CD8-positive, alpha-beta T cell (primary cell): ENCODE measurements at regions of chr15 and their contacts with region 1.

Region 1: DNA sequence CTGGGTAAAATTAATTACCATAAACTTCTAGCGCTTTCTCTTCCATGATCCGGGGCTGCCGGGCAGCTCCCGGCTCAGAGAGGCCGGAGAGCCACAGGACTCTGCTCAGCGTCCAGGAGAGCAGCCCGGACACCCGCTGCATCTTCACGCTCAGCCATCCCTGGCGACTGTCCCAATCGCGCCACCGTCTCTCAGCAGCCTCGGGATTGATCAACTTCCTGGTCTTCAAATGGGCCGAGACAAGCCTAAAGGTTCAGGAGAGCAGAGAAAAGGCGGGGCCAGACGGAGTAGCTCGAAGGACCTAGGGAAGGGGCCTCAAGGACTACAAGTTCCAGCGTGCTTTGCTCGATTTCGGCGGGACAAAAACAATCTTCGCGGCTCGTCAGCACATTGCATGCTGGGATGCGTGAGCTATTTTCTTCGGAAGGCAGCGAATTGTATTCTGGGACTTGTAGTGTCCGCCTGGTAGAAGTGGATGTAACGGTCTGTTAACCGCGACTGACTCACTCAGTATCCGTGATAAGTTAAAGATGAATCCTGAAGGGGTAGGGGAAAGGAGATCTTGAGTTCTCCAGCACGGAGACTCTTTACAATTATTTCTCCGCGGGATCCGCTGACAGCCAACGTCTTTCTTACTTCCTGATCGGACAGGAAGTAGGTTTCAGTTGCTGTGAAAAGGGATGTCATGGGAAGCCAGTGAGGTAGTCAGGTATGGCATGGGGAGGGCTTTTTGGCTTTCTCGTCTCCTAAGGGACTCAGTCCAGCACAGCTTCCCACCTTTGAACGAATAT is at the start of gene CIAO2A:
- DNase-seq: peak; percentile 79 to 97 (median 91)
- ATAC-seq: peak; percentile 72
- H3K4me3 ChIP-seq: peak within 1 kb of the TSS; percentile 73 to 76
- H3K4me3 Mint-ChIP-seq: peak within 1 kb of the TSS; percentile 94
- H3K27ac ChIP-seq: peak within 1 kb of the TSS; percentile 82 to 91
- H3K27ac Mint-ChIP-seq: peak within 1 kb of the TSS; percentile 97
- H3K4me1 ChIP-seq: peaks cover 47% of the 10 kb centered on the region
- H3K4me1 Mint-ChIP-seq: peaks cover 74% of the 10 kb centered on the region
- H3K27me3 ChIP-seq: no peaks in the 10 kb centered on the region
- H3K27me3 Mint-ChIP-seq: no peaks in the 10 kb centered on the region
- CTCF ChIP-seq: no peak
- total RNA-seq, gene CIAO2A: 12.4 to 12.7 TPM

Region 2: DNA sequence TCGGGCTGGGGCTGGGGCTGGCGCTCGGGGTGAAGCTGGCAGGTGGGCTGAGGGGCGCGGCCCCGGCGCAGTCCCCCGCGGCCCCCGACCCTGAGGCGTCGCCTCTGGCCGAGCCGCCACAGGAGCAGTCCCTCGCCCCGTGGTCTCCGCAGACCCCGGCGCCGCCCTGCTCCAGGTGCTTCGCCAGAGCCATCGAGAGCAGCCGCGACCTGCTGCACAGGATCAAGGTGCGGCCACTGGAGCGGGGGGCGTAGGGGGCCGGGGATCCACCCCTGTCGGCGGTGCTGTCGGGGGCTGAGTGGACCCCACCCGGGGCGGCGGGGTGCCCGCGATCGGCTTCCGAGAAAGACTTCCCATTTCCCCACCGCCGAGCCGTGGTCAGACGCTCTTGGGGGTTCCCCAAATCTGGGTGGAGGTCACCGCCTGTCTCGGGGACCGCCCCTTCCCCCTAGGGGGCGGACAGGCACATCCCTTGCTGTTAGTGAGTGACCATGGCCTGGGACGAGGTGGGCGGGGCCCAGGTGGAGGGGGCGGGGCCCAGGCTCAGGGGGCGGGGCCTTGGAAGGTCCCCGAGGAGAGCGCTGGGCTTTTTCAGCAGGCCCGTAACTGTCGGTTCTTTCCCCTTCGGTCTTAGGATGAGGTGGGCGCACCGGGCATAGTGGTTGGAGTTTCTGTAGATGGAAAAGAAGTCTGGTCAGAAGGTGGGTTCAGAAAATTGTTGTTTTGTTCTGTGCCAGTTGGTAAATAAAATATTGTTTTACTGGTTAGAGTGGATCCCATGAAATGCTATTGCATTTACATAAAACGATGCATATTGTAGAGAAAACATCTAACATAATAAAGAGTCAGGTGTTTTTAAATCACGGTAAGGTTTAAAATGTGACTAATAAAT is 971.6 kb before region 1 on chr15:
- CTCF ChIA-PET with region 1: no interaction called
- POLR2A ChIA-PET with region 1: no interaction called
- intact Hi-C with region 1: loop called in 1 of 2 experiments (anchors 2 kb)
- DNase-seq: peak; percentile 19 to 87 (median 69)
- ATAC-seq: peak; percentile 81
- H3K4me3 ChIP-seq: peak overlapping the region; percentile 83 to 87
- H3K4me3 Mint-ChIP-seq: peak overlapping the region; percentile 87
- H3K27ac ChIP-seq: peak overlapping the region; percentile 61 to 66
- H3K27ac Mint-ChIP-seq: peak overlapping the region; percentile 90
- H3K4me1 ChIP-seq: peaks cover 7% of the 10 kb centered on the region
- H3K4me1 Mint-ChIP-seq: peaks cover 17% of the 10 kb centered on the region
- H3K27me3 ChIP-seq: no peaks in the 10 kb centered on the region
- H3K27me3 Mint-ChIP-seq: no peaks in the 10 kb centered on the region
- CTCF ChIP-seq: no peak

Region 3: GRCh38 chr15:63504247-63504978 is 589.4 kb before region 1 on chr15 and contains the start of gene USP3:
- CTCF ChIA-PET with region 1: interaction called, 3 read pairs
- POLR2A ChIA-PET with region 1: interaction called, 5 read pairs
- intact Hi-C with region 1: loop called (anchors 2 to 10 kb)
- DNase-seq: peak; percentile 88 to 96 (median 92)
- ATAC-seq: peak; percentile 72
- H3K4me3 ChIP-seq: peak within 1 kb of the TSS; percentile 81 to 86
- H3K4me3 Mint-ChIP-seq: peak within 1 kb of the TSS; percentile 98
- H3K27ac ChIP-seq: peak within 1 kb of the TSS; percentile 94 to 99
- H3K27ac Mint-ChIP-seq: peak within 1 kb of the TSS; percentile 100
- H3K4me1 ChIP-seq: peaks cover 77% of the 10 kb centered on the region
- H3K4me1 Mint-ChIP-seq: peaks cover 78% of the 10 kb centered on the region
- H3K27me3 ChIP-seq: no peaks in the 10 kb centered on the region
- H3K27me3 Mint-ChIP-seq: no peaks in the 10 kb centered on the region
- CTCF ChIP-seq: no peak
- total RNA-seq, gene USP3: 264 to 275 TPM

Region 4: DNA sequence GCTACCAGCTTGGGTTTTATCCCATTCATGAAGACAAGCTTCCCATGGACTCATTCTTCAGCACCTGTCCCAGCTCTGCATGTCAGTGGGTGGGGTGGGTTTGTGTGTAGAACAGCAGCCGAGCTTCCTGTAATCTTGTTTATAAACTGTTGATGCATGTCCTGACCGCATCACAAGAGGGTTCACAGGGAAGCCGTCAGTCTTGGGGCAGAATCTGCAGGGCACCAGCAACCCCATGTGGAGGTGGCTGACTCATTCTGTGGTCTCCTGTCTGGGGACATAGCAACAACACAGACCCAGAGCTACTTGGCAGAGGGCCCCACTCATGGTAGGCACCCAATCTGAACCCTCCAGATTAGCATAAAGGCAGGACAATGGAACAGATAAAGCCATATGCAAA is 83.1 kb before region 1 on chr15:
- CTCF ChIA-PET with region 1: no interaction called
- POLR2A ChIA-PET with region 1: no interaction called
- intact Hi-C with region 1: loop called in 1 of 2 experiments (anchors 2 kb)
- DNase-seq: peak; percentile 78 to 97 (median 89)
- ATAC-seq: peak; percentile 89
- H3K4me3 ChIP-seq: no peak overlapping the region
- H3K4me3 Mint-ChIP-seq: peak overlapping the region; percentile 72
- H3K27ac ChIP-seq: peak overlapping the region; percentile 52 to 67
- H3K27ac Mint-ChIP-seq: peak overlapping the region; percentile 98
- H3K4me1 ChIP-seq: peaks cover 29% of the 10 kb centered on the region
- H3K4me1 Mint-ChIP-seq: peaks cover 40% of the 10 kb centered on the region
- H3K27me3 ChIP-seq: no peaks in the 10 kb centered on the region
- H3K27me3 Mint-ChIP-seq: no peaks in the 10 kb centered on the region
- CTCF ChIP-seq: no peak

Region 5: GRCh38 chr15:64060716-64061115 is 33.1 kb before region 1 on chr15:
- CTCF ChIA-PET with region 1: no interaction called
- POLR2A ChIA-PET with region 1: no interaction called
- intact Hi-C with region 1: no loop called
- DNase-seq: peak in 1 of 9 experiments; percentile 40
- ATAC-seq: no peak
- H3K4me3 ChIP-seq: no peak overlapping the region
- H3K4me3 Mint-ChIP-seq: no peak overlapping the region
- H3K27ac ChIP-seq: no peak overlapping the region
- H3K27ac Mint-ChIP-seq: no peak overlapping the region
- H3K4me1 ChIP-seq: no peaks in the 10 kb centered on the region
- H3K4me1 Mint-ChIP-seq: no peaks in the 10 kb centered on the region
- H3K27me3 ChIP-seq: no peaks in the 10 kb centered on the region
- H3K27me3 Mint-ChIP-seq: peaks cover 2% of the 10 kb centered on the region
- CTCF ChIP-seq: no peak

Region 6: GRCh38 chr15:64209680-64210334 is 116.0 kb after region 1 on chr15:
- CTCF ChIA-PET with region 1: no interaction called
- POLR2A ChIA-PET with region 1: no interaction called
- intact Hi-C with region 1: no loop called
- DNase-seq: peak in 2 of 9 experiments; percentile 20 to 39
- ATAC-seq: no peak
- H3K4me3 ChIP-seq: no peak overlapping the region
- H3K4me3 Mint-ChIP-seq: no peak overlapping the region
- H3K27ac ChIP-seq: no peak overlapping the region
- H3K27ac Mint-ChIP-seq: no peak overlapping the region
- H3K4me1 ChIP-seq: no peaks in the 10 kb centered on the region
- H3K4me1 Mint-ChIP-seq: no peaks in the 10 kb centered on the region
- H3K27me3 ChIP-seq: no peaks in the 10 kb centered on the region
- H3K27me3 Mint-ChIP-seq: no peaks in the 10 kb centered on the region
- CTCF ChIP-seq: peak; percentile 59

Region 7: DNA sequence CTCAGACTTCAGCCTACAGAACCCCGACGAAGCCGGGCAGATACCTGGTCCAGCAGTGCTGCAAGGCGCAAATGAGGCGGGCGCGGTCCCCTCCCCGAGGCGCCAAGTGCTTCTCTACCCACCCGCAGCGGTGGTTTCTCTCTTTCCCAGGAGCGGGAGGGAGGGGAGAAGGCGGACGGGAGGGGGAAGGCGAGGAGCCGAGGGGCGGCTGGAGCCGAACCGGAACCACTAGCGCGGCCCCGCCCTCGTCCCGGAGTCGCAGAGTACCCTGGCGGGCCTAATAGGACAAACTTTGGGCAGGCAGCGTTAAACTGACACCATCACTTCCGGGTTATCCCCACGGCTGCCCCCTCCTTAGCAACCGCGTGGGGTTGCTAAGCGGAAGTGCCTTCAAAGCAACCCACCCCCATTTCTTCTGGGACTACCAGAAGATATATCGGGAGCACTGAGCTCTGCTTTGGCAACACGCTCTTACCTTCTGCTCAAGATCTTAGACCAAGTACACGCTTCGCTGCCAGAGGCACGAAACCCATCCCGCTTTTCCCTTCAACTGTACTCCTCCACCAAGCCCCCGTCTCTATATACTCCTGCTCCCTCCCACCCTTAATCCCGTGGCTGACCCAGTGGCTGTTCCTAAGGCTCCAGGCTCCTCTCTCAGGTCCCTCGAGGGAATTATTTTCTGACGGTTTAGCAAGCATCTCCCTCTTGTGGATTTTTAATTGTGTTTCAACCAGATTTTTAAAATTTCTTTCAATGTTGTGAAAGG is 262.3 kb after region 1 on chr15 and contains the start of gene CSNK1G1:
- CTCF ChIA-PET with region 1: no interaction called
- POLR2A ChIA-PET with region 1: no interaction called
- intact Hi-C with region 1: loop called (anchors 1 to 10 kb)
- DNase-seq: peak; percentile 77 to 97 (median 92)
- ATAC-seq: peak; percentile 96
- H3K4me3 ChIP-seq: peak within 1 kb of the TSS; percentile 86 to 91
- H3K4me3 Mint-ChIP-seq: peak within 1 kb of the TSS; percentile 94
- H3K27ac ChIP-seq: peak within 1 kb of the TSS; percentile 67 to 74
- H3K27ac Mint-ChIP-seq: peak within 1 kb of the TSS; percentile 89
- H3K4me1 ChIP-seq: peaks cover 9% of the 10 kb centered on the region
- H3K4me1 Mint-ChIP-seq: peaks cover 18% of the 10 kb centered on the region
- H3K27me3 ChIP-seq: no peaks in the 10 kb centered on the region
- H3K27me3 Mint-ChIP-seq: no peaks in the 10 kb centered on the region
- CTCF ChIP-seq: peak; percentile 43
- total RNA-seq, gene CSNK1G1: 10.0 to 12.9 TPM

Region 8: DNA sequence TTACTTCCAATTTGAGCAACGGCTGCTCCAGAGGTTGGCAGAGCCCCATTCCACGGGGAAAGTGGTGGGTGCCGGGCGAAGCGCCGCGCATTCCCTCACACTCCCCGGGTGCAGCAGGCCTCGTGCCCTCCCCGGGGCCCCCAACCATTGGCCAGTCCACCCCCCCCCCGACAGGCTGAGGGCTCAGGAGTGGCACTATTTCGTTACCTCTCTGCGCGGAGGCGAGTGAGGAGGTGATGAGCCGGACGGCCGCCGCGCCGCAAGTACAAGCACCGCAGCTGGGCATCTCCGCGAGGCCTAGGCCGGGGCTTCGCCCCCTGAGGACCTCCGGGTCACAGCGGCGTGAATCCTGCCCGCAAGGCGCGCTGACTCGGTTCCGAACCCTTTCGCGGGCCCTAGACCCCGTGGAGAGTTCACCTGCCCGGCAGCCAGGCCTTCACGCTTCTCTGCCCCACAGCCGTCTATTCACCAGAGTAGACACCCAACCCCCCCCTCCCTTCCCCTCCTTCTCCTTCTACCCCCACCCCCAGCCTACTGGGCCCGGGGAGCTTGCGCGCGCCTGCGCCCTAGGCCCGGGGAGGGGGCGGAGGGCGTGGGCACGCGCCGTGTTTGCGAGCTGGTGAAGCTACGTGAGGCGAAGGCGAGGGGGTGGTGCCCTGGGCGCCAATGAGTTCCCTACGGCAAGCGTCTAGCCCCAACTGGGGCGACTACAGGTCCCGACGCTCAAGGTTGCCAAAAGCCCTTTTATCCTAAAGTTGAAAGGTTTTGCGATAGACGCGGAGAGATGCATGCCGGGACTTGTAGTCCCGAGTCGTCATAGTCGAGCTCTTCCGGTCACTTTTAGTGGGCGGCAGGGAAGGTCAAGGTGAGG is 1091.3 kb after region 1 on chr15 and contains the start of gene CLPX:
- CTCF ChIA-PET with region 1: no interaction called
- POLR2A ChIA-PET with region 1: interaction called, 3 read pairs
- intact Hi-C with region 1: loop called in 1 of 2 experiments (anchors 2 kb)
- DNase-seq: peak; percentile 80 to 98 (median 92)
- ATAC-seq: peak; percentile 98
- H3K4me3 ChIP-seq: peak within 1 kb of the TSS; percentile 98 to 99
- H3K4me3 Mint-ChIP-seq: peak within 1 kb of the TSS; percentile 95
- H3K27ac ChIP-seq: peak within 1 kb of the TSS; percentile 75 to 88
- H3K27ac Mint-ChIP-seq: peak within 1 kb of the TSS; percentile 94
- H3K4me1 ChIP-seq: peaks cover 15% of the 10 kb centered on the region
- H3K4me1 Mint-ChIP-seq: peaks cover 28% of the 10 kb centered on the region
- H3K27me3 ChIP-seq: no peaks in the 10 kb centered on the region
- H3K27me3 Mint-ChIP-seq: no peaks in the 10 kb centered on the region
- CTCF ChIP-seq: no peak
- total RNA-seq, gene CLPX: 29.0 to 31.7 TPM

Region 9: GRCh38 chr15:65231306-65231705 is 1137.5 kb after region 1 on chr15:
- CTCF ChIA-PET with region 1: no interaction called
- POLR2A ChIA-PET with region 1: no interaction called
- intact Hi-C with region 1: no loop called
- DNase-seq: no peak
- ATAC-seq: no peak
- H3K4me3 ChIP-seq: no peak overlapping the region
- H3K4me3 Mint-ChIP-seq: no peak overlapping the region
- H3K27ac ChIP-seq: no peak overlapping the region
- H3K27ac Mint-ChIP-seq: no peak overlapping the region
- H3K4me1 ChIP-seq: no peaks in the 10 kb centered on the region
- H3K4me1 Mint-ChIP-seq: no peaks in the 10 kb centered on the region
- H3K27me3 ChIP-seq: no peaks in the 10 kb centered on the region
- H3K27me3 Mint-ChIP-seq: no peaks in the 10 kb centered on the region
- CTCF ChIP-seq: no peak